AG04449 (cell line): ENCODE measurements at regions of chr13 and their contacts with region 1.

Region 1: DNA sequence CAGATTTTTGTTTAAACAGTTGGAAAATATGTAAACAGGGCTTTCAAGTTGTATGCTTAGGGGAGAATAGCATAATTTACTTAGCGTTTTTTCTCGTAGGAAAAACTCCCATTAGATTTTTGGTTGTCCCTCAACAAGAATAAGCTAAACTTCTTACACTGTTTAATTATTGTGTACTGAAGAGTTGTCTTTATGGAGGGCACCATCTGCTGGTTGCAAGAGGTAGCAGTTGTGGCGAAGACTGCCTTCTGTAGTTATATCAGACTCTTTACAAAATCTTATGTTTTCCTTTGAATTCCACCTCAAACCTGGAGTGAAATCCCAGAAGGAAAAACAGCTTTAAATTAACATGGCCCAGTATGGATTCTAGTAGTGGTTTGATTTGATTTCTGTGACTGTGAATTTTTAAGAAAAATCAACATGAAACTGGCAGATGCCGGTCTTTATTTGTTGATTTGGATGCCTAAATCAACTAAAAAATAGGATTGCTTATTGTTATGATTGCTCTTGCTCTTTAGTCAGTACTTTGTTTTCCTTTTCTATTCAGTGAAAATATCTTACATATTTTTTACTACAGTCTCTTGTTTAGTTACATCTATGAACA is 53.4 kb downstream of the PDS5B start:
- DNase-seq: peak; percentile 36
- H3K4me3 ChIP-seq: no peak overlapping the region
- CTCF ChIP-seq: peak; percentile 73

Region 2: DNA sequence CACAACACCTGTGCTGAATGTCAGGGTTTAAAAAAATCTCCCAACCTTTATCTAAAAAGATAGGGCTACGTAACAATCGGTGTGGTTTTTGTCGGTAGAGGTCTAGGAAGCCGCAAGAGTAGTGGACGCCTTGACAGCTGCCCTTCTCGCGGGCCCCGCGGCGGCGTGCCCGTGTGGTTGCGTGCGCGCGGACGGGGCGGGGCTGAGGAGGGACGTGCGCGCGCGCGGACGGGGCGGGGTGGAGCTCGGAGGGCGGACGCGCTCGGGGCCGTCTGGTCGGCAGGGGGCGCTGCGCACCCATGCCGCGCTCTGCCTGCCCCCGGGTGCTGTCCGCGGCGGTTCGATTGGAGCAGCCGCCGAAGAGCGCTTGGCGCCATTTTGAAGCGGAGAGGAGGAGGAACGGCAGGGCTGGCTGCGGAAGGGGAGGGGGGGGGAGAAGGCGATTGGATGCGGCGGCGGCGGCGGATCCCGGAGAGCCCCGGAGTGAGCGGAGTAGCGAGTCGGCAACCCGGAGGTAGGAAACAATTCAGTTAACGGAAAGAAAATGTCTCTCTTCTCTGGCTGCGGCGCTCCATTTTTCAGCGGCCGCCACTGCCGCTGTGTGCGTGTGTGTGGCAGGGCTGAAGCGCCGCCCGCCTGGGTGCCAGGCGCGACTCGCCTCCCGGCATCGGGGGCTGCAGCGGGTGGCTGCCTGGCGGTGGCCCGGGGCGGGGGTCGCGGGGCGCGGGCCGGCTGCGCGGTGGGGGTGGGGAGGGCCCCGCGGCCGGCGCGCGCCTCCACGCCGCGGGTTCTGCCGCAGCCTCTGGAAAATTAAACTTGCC is 53.3 kb before region 1 on chr13 and contains the start of gene PDS5B:
- CTCF ChIA-PET with region 1: interaction called, 50 read pairs
- POLR2A ChIA-PET with region 1: no interaction called
- DNase-seq: peak; percentile 51
- H3K4me3 ChIP-seq: peak within 1 kb of the TSS; percentile 85
- CTCF ChIP-seq: peak; percentile 80

Region 3: GRCh38 chr13:32609428-32609827 is 30.2 kb before region 1 on chr13:
- CTCF ChIA-PET with region 1: interaction called, 10 read pairs
- POLR2A ChIA-PET with region 1: no interaction called
- DNase-seq: no peak
- H3K4me3 ChIP-seq: no peak overlapping the region
- CTCF ChIP-seq: no peak

Region 4: DNA sequence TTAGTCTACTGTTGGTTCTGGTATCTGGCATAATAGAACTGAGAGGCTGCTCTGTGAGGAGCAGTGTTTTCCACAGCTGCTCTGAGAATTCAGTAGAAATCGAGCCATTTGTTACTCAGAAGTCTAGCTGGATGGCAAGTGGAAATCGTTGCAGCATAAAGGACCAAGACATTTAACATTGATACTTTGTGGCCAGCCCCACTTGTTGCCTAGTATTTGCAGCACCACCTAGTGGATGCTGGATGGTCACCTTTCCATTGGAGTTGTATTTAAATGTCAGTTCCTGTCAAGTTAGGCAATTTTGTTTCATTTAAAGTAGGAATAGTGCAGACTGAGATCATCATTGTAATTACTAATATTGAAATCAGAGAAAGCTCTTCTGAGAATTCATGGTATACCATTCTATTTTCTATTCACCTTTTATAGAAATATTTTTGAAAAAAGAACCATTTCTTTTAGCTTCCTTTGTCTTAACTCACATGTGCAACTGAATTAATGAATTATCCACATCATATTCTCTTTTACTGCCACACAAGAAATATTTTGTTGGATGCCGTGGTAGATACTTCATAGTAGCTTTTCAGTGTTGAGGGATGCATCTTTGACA is 11.2 kb after region 1 on chr13:
- CTCF ChIA-PET with region 1: interaction called, 69 read pairs
- POLR2A ChIA-PET with region 1: no interaction called
- DNase-seq: no peak
- H3K4me3 ChIP-seq: no peak overlapping the region
- CTCF ChIP-seq: peak; percentile 71

Region 5: GRCh38 chr13:33026489-33027152 is 387.0 kb after region 1 on chr13:
- CTCF ChIA-PET with region 1: no interaction called
- POLR2A ChIA-PET with region 1: no interaction called
- DNase-seq: no peak
- H3K4me3 ChIP-seq: no peak overlapping the region
- CTCF ChIP-seq: no peak